GM13976 (cell line): ENCODE measurements at regions of chr5 and their contacts with region 1.

Region 1: GRCh38 chr5:65481635-65482295 is at the start of gene ADAMTS6:
- DNase-seq: peak; percentile 68
- CTCF ChIP-seq: no peak

Region 2: DNA sequence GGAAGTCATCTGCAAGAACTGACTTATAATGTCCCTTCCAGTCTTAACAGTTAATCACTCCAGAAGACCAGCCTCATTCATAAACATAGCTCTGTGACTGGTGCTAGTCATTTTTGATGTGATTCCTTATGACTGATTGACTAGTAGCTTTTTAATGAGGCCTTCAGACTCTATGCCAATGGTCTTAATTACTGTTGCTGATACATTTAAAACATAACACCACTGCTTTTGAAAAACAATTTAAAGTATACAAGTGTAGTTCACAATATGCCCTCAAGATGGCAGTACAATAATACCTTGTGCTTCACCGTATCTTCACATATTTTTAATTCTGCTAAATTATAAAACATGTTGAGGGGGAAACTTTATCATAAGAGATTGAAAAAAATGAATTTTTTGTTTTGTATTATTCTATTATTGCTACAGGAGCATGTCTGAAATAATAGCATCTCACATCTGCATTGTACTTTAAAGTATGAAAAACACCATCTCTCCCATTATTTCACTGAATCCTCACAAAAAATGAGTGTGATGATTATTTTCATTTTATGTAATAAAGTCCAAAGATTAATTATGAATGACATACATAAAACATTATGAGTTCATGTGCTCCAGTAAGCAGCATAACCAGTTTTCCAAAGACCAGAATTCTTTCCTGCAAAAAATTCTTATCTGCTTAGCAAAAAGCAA is 846.6 kb before region 1 on chr5:
- in situ Hi-C with region 1: loop called (anchors 25 kb)
- DNase-seq: peak; percentile 15
- CTCF ChIP-seq: peak; percentile 44

Region 3: DNA sequence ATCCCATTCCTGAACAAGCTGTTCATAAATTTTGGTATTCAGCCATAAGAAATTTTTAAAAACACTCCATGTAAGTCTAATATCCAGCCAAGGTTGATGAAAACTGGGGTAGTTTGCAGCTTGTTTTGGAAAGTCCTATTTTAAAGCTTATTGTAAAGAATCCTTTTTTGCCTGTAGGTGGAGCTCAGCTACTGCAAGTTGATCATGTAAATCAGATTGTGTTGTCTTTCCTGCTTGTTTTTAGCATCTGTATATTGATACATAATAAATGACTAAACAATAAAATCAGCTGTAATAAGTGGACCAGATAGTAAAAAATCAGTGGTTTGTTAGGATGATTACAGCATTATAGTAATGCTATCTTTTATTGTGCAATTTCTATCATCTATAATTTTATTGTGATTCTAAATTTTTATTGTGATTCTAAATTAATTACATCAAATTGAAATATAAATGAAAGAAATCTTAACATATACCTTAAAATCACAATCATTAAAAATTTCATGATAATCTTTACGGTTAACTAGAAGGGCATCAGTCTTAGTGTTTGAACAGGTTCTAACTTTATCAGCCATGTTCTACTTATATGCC is 670.6 kb before region 1 on chr5:
- in situ Hi-C with region 1: loop called (anchors 5 kb)
- DNase-seq: peak; percentile 16
- CTCF ChIP-seq: peak; percentile 43

Region 4: DNA sequence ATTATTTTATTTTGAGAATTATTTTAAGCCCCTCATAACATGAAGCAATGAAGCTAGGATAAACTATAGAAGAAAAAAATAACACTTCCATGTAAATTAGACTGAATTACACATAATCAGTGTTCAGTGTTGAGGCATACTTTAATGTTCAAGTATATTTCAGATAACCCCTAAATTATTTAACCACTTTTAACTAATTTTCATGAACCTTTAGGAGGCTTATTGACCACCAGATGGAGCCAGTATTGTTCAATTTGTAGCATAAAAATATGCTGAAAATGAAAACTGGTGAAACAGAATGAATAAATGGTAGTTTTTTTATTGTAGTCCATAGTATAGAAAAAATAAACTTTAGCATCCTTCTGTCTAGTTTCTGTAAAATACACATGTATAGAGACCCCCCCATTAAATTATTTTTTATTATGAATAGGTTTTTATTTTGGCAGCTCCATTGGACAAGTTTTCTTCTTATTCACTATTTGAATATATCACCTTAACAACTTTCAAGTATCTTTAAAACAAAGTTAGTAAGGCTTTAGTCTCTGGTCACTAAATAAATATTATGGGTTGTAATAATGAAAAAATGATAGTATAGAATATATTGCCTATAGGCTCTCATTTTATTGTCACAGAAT is 522.9 kb before region 1 on chr5:
- in situ Hi-C with region 1: loop called (anchors 10 kb)
- DNase-seq: no peak
- CTCF ChIP-seq: no peak

Region 5: DNA sequence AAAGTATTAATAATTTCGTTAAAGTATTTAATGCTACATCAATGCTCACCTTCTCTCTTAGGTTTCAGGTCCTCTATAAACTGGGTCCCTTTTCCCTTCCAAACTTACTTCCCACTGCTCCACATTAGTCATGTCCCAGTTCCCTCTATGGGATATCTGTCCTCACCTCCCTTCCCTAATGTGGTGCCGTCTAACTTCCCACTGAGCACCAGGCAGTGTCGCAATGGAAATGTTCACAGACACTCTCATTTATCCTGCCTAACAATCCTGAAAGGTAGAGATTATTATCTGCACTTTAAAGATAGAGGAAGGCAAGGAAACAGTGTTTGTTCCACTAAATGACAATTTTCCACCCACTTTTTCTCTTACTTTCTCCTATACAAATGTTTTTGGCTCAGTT is 383.4 kb before region 1 on chr5:
- in situ Hi-C with region 1: loop called (anchors 10 kb)
- DNase-seq: no peak
- CTCF ChIP-seq: no peak

Region 6: GRCh38 chr5:65364907-65365306 is 116.9 kb before region 1 on chr5:
- in situ Hi-C with region 1: no loop called
- DNase-seq: no peak
- CTCF ChIP-seq: no peak